Caco-2 (cell line): ENCODE measurements at regions of chr9 and their contacts with region 1.

Region 1: GRCh38 chr9:116661037-116661954 is 25.8 kb upstream of the TRIM32 start:
- DNase-seq: peak in 1 of 2 experiments; percentile 48
- H3K4me3 ChIP-seq: no peak overlapping the region
- H3K4me3 Mint-ChIP-seq: no peak overlapping the region
- H3K27ac Mint-ChIP-seq: no peak overlapping the region
- H3K4me1 ChIP-seq: no peaks in the 10 kb centered on the region
- H3K4me1 Mint-ChIP-seq: no peaks in the 10 kb centered on the region
- H3K27me3 ChIP-seq: no peaks in the 10 kb centered on the region
- H3K27me3 Mint-ChIP-seq: no peaks in the 10 kb centered on the region
- CTCF ChIP-seq: peak; percentile 73 to 75

Region 2: DNA sequence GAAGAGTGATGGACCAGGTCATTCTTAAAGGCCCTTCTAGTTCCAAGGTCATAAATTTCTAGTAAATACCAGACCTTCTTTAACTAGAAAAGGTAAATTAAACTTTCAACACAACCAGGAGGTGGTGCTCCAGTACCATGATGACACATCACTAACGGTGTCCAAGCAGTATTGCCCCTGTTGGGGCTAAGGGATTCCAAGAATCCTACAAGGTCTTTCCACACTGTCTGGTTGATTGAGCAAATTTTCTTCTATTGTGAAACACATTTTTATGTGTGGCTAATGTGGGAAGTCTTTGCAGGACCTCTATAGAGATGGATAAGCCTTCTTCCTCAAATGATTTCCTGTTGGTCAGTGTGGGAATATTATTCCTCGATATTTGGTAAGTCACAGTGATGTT is 967.3 kb before region 1 on chr9:
- CTCF ChIA-PET with region 1: no interaction called
- POLR2A ChIA-PET with region 1: no interaction called
- intact Hi-C with region 1: loop called (anchors 2 kb)
- DNase-seq: peak; percentile 36 to 38
- H3K4me3 ChIP-seq: no peak overlapping the region
- H3K4me3 Mint-ChIP-seq: no peak overlapping the region
- H3K27ac Mint-ChIP-seq: no peak overlapping the region
- H3K4me1 ChIP-seq: no peaks in the 10 kb centered on the region
- H3K4me1 Mint-ChIP-seq: no peaks in the 10 kb centered on the region
- H3K27me3 ChIP-seq: no peaks in the 10 kb centered on the region
- H3K27me3 Mint-ChIP-seq: peaks cover 13% of the 10 kb centered on the region
- CTCF ChIP-seq: no peak

Region 3: GRCh38 chr9:115883457-115884329 is 777.6 kb before region 1 on chr9:
- CTCF ChIA-PET with region 1: no interaction called
- POLR2A ChIA-PET with region 1: no interaction called
- intact Hi-C with region 1: loop called (anchors 1 kb)
- DNase-seq: peak; percentile 37 to 42
- H3K4me3 ChIP-seq: no peak overlapping the region
- H3K4me3 Mint-ChIP-seq: no peak overlapping the region
- H3K27ac Mint-ChIP-seq: no peak overlapping the region
- H3K4me1 ChIP-seq: no peaks in the 10 kb centered on the region
- H3K4me1 Mint-ChIP-seq: no peaks in the 10 kb centered on the region
- H3K27me3 ChIP-seq: no peaks in the 10 kb centered on the region
- H3K27me3 Mint-ChIP-seq: peaks cover 12% of the 10 kb centered on the region
- CTCF ChIP-seq: peak; percentile 63 to 67

Region 4: DNA sequence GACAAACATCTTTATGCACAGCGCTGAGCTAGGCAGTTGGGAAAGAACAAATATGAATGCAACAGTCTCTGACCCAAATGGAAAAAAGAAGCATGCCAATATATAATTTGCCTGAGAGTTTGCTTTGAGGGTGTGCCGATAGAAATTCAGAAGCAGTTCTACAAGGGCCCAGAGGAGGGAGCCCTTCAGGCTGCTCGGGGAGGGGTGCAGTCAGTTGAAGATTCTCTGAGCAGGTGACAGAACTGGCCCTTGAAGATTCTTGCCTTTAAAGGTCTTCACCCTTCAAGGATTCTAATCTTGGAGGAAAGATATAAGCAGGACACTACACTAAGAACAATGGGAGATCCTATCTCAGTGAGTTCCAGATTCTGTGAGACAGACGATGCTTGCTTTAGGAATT is 511.5 kb before region 1 on chr9:
- CTCF ChIA-PET with region 1: no interaction called
- POLR2A ChIA-PET with region 1: no interaction called
- intact Hi-C with region 1: loop called (anchors 1 kb)
- DNase-seq: peak; percentile 40 to 52
- H3K4me3 ChIP-seq: no peak overlapping the region
- H3K4me3 Mint-ChIP-seq: no peak overlapping the region
- H3K27ac Mint-ChIP-seq: no peak overlapping the region
- H3K4me1 ChIP-seq: no peaks in the 10 kb centered on the region
- H3K4me1 Mint-ChIP-seq: peaks cover 12% of the 10 kb centered on the region
- H3K27me3 ChIP-seq: peaks cover 2% of the 10 kb centered on the region
- H3K27me3 Mint-ChIP-seq: peaks cover 20% of the 10 kb centered on the region
- CTCF ChIP-seq: peak; percentile 70 to 75

Region 5: DNA sequence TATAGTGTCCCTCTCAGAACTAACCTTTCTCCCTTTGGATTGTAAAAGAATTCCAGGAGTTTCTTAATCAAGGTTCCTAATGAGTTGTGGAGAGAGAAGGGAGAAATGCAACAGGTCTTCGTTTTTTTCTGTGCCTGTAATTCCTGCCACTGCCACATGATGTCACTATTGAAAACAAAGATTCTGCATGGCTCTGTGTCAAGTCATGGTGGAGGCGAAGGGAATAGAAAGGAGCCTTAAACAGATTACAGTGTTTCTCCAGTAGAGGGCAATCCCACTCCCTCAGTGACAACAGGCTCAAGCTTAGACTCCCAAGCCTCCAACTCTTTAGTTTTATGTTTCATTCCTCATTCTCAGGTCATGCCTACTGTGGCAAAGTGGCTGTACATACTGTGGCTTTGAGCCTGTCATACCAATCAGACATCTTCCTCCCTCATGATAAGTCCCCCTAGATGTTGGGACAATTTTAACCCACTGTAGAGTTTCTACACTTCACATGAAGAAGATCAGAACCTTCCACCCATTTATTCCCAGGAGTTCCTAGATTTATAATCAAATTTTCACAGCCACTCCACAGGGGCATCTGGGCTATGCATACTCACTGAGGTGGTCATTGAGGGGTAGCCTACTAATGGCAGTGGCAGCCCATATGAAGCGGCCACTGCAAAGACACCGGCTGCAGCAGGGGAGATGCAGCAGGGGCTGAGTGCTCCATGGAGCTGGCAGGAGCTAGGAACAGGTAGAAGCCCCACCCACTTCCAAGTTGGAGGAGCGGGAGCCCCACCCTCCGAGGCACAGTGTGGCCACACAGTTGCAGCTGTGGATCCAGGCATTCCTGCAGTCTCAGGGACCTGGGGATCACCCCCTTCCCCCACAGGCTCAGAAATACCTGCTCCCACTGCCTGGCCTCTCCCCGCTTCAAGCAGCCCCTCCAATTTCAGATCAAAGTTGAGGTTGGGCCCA is 71.6 kb before region 1 on chr9:
- CTCF ChIA-PET with region 1: no interaction called
- POLR2A ChIA-PET with region 1: no interaction called
- intact Hi-C with region 1: loop called (anchors 1 kb)
- DNase-seq: peak in 1 of 2 experiments; percentile 50
- H3K4me3 ChIP-seq: no peak overlapping the region
- H3K4me3 Mint-ChIP-seq: no peak overlapping the region
- H3K27ac Mint-ChIP-seq: no peak overlapping the region
- H3K4me1 ChIP-seq: no peaks in the 10 kb centered on the region
- H3K4me1 Mint-ChIP-seq: no peaks in the 10 kb centered on the region
- H3K27me3 ChIP-seq: no peaks in the 10 kb centered on the region
- H3K27me3 Mint-ChIP-seq: no peaks in the 10 kb centered on the region
- CTCF ChIP-seq: peak; percentile 54 to 75

Region 6: GRCh38 chr9:116632990-116633838 is 28.1 kb before region 1 on chr9:
- CTCF ChIA-PET with region 1: no interaction called
- POLR2A ChIA-PET with region 1: no interaction called
- intact Hi-C with region 1: no loop called
- DNase-seq: no peak
- H3K4me3 ChIP-seq: no peak overlapping the region
- H3K4me3 Mint-ChIP-seq: no peak overlapping the region
- H3K27ac Mint-ChIP-seq: no peak overlapping the region
- H3K4me1 ChIP-seq: no peaks in the 10 kb centered on the region
- H3K4me1 Mint-ChIP-seq: peaks cover 2% of the 10 kb centered on the region
- H3K27me3 ChIP-seq: no peaks in the 10 kb centered on the region
- H3K27me3 Mint-ChIP-seq: no peaks in the 10 kb centered on the region
- CTCF ChIP-seq: no peak

Region 7: DNA sequence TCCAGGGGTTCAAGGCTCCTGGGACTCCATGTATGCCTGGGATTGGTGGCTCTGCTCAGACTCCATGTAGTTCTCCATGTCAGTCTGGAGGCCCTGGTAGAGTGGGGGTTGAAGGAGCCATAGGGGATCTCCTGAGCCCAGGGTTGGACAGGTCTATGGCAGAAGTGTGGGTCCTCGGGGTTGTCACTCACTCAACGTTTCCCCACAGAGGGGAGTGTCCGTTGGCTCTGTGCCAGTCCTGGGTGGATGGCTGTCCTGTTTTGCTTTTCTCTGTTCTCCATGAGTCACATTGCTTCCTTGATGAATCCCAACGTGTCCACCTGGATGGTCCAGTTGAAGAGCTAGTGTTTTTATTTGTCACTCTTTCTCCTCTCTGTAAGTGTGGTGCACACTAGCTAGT is 847.4 kb after region 1 on chr9:
- CTCF ChIA-PET with region 1: no interaction called
- POLR2A ChIA-PET with region 1: no interaction called
- intact Hi-C with region 1: no loop called
- DNase-seq: no peak
- H3K4me3 ChIP-seq: no peak overlapping the region
- H3K4me3 Mint-ChIP-seq: no peak overlapping the region
- H3K27ac Mint-ChIP-seq: no peak overlapping the region
- H3K4me1 ChIP-seq: no peaks in the 10 kb centered on the region
- H3K4me1 Mint-ChIP-seq: no peaks in the 10 kb centered on the region
- H3K27me3 ChIP-seq: peaks cover 1% of the 10 kb centered on the region; the same call in 1 of the 2 replicates
- H3K27me3 Mint-ChIP-seq: no peaks in the 10 kb centered on the region
- CTCF ChIP-seq: no peak